Activated naive CD4-positive, alpha-beta T cell treated with anti-CD3 and anti-CD28 coated beads, Interleukin-2, amount 10 ng/mL, durations not matched to agents 7 days and 5 days (primary cell): ENCODE measurements at regions of chr20 and their contacts with region 1.

Region 1: GRCh38 chr20:50179507-50180016 is 11.1 kb upstream of the CEBPB start:
- DNase-seq: no peak
- H3K4me3 Mint-ChIP-seq: no peak overlapping the region
- H3K27ac Mint-ChIP-seq: no peak overlapping the region
- H3K4me1 Mint-ChIP-seq: no peaks in the 10 kb centered on the region
- H3K27me3 Mint-ChIP-seq: peaks cover 17% of the 10 kb centered on the region

Region 2: GRCh38 chr20:50120897-50121693 is 58.5 kb before region 1 on chr20:
- CTCF ChIA-PET with region 1: interaction called, 32 read pairs
- DNase-seq: peak; percentile 77
- H3K4me3 Mint-ChIP-seq: no peak overlapping the region
- H3K27ac Mint-ChIP-seq: peak overlapping the region; percentile 49
- H3K4me1 Mint-ChIP-seq: peaks cover 10% of the 10 kb centered on the region
- H3K27me3 Mint-ChIP-seq: no peaks in the 10 kb centered on the region